ENCODE measurements at regions of chr1 and their contacts with region 1.

Region 1: DNA sequence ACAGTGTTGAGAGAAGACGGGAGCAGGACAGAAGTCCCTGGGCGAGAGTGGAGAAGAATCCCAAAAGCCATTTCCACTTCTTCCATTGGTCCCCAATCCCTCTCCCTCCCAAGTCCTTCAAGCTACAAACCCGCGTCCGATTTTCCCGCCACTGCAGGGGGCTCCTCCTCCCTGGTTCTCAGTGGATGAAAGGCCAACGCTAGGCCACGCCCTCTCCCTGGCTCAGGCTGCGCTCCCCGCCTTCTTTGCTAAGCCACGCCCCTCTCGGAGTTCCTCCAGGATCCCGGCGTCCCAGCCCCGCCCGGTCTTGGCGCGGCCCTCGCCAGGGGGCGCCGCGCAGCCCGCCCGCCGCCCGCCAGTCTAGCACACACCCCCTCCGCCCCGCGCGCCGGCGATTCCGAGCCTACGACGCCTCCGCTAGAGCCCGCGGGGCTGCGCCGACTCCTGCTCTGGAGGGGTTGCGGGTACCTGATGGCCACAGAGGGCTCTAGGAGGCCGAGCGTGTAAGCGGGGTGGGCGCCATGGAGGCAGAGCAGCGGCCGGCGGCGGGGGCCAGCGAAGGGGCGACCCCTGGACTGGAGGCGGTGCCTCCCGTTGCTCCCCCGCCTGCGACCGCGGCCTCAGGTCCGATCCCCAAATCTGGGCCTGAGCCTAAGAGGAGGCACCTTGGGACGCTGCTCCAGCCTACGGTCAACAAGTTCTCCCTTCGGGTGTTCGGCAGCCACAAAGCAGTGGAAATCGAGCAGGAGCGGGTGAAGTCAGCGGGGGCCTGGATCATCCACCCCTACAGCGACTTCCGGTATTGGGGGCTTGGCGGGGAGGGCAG is at the start of gene HCN3:
- DNase-seq: peak; percentile 85 to 99
- H3K4me3 ChIP-seq: peak within 1 kb of the TSS; percentile 64 to 80
- H3K27ac ChIP-seq: peak within 1 kb of the TSS; percentile 53 to 64
- H3K4me1 ChIP-seq: peaks cover 6 to 15% of the 10 kb centered on the region in 2 donors
- H3K27me3 ChIP-seq: no peaks in the 10 kb centered on the region
- CTCF ChIP-seq: peak in 2 of 3 experiments; percentile 62 to 74
- total RNA-seq, gene HCN3: 2.6 TPM

Region 2: GRCh38 chr1:155244368-155245162 is 32.7 kb before region 1 on chr1:
- intact Hi-C with region 1: no loop called
- DNase-seq: peak; percentile 97 to 99
- H3K4me3 ChIP-seq: peak overlapping the region; percentile 69 to 80
- H3K27ac ChIP-seq: peak overlapping the region; percentile 83 to 92
- H3K4me1 ChIP-seq: peaks cover 3 to 28% of the 10 kb centered on the region in 2 donors
- H3K27me3 ChIP-seq: no peaks in the 10 kb centered on the region
- CTCF ChIP-seq: peak; percentile 27 to 99 (median 58)

Region 3: DNA sequence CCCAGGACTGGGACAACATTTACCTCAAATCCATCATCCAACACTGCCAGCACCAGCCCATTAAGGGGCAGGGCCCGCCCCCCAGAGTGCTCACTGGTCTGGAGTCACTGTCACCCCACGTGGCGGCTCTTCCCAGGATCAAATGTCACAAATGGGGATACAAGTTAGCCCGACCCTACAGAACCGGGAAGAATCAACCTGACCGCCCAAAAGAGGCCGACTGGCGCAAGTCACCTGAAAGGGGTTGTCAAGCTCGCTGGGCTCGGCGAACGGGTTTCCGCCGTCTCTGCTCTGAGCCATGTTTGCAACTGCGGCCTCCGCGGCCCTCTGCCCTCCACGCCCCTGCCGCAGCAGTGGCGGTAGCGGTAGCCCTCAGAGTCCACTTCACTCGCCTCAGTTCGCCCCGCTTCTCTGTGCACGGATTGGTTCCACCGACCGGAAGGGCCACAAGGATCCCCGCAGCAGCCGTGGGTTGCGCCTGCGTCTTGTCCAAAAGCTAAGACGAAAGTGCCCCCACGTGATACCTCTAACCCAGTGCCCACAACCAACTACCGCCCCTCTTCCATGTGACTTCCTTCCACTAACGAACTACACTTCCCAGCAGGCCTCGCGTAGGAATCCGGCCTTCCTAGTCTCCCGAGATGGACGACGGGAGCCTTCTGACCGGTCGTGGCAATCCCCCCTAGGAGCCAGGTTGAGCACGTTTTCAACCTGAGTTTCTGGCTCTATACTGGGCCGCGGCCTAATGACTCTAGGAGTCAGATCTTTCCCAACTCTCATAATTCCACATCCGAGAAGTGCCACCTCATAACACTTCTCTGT is 15.2 kb before region 1 on chr1 and contains the start of gene SCAMP3:
- intact Hi-C with region 1: loop called (anchors 1 kb)
- DNase-seq: peak; percentile 88 to 98
- H3K4me3 ChIP-seq: peak within 1 kb of the TSS; percentile 58 to 69
- H3K27ac ChIP-seq: peak within 1 kb of the TSS; percentile 79 to 82
- H3K4me1 ChIP-seq: peaks cover 7 to 13% of the 10 kb centered on the region in 2 donors
- H3K27me3 ChIP-seq: no peaks in the 10 kb centered on the region
- CTCF ChIP-seq: no peak
- total RNA-seq, gene SCAMP3: 63.6 TPM

Region 4: DNA sequence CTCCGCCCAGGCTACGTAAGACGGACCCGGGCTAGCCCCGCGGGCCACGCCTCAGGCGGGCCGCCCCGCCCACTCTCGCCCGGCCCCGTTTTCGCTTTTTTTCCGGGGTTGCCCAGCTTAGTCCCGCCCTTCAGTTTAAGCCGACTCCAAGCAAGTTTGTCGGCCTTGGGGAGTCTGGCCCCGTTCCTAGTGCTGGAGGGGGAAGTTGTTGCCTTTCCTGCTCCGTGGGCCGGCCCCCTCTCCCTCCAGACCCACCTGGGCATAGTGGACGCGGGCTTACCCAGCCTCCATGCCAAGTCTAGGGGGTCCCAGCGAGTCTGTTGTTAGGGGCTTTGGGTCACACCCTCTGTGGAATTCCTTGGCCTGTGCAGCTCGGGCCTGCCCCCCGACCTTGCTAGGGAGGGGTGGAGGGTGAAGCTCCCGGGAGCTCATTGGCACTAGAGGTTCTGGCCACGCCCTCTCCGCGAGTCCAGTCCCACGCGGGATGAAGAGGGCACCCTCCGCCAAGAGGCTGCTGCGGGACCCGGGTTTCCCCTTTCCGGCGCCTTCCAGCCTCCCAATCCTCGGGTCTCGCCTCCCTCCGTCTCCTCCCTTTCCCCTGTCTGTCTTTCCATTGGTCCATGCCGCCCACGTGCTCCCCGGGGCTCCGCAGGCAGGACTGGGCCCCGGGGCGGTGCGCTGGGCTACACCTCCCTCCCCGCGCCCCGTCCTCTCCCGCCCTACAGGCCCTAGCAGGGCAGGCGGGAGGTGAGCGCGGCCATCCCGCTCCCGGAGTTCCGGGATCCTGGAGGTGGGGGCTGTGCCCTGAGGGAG is 46.7 kb after region 1 on chr1:
- intact Hi-C with region 1: loop called (anchors 1 kb)
- DNase-seq: peak; percentile 88 to 97
- H3K4me3 ChIP-seq: peak overlapping the region; percentile 74 to 89
- H3K27ac ChIP-seq: peak overlapping the region; percentile 96 to 97
- H3K4me1 ChIP-seq: peaks cover 9 to 22% of the 10 kb centered on the region in 2 donors
- H3K27me3 ChIP-seq: no peaks in the 10 kb centered on the region
- CTCF ChIP-seq: no peak

Region 5: GRCh38 chr1:155562581-155563376 is 285.5 kb after region 1 on chr1 and contains the start of gene ASH1L:
- intact Hi-C with region 1: loop called (anchors 1 kb)
- DNase-seq: peak; percentile 66 to 93
- H3K4me3 ChIP-seq: peak within 1 kb of the TSS; percentile 87 to 91
- H3K27ac ChIP-seq: peak within 1 kb of the TSS; percentile 97 to 99
- H3K4me1 ChIP-seq: peaks cover 6 to 25% of the 10 kb centered on the region in 2 donors
- H3K27me3 ChIP-seq: no peaks in the 10 kb centered on the region
- CTCF ChIP-seq: peak in 1 of 3 experiments; percentile 22
- total RNA-seq, gene ASH1L: 16.2 TPM

Region 6: GRCh38 chr1:155744711-155745283 is 467.5 kb after region 1 on chr1:
- intact Hi-C with region 1: loop called (anchors 1 kb)
- DNase-seq: no peak
- H3K4me3 ChIP-seq: peak overlapping the region; percentile 65 to 76
- H3K27ac ChIP-seq: peak overlapping the region; percentile 74 to 78
- H3K4me1 ChIP-seq: peaks cover 0 to 7% of the 10 kb centered on the region in 2 donors
- H3K27me3 ChIP-seq: no peaks in the 10 kb centered on the region
- CTCF ChIP-seq: no peak